Activated CD8-positive, alpha-beta T cell treated with anti-CD3 and anti-CD28 coated beads, Interleukin-2, amount 10 ng/mL, durations not matched to agents 7 days and 5 days (primary cell): ENCODE measurements at regions of chr17 and their contacts with region 1.

Region 1: GRCh38 chr17:37373530-37374159 is 2.1 kb upstream of the C17orf78 start:
- DNase-seq: peak; percentile 84
- ATAC-seq: peak; percentile 96
- H3K4me3 Mint-ChIP-seq: no peak overlapping the region
- H3K27ac Mint-ChIP-seq: no peak overlapping the region
- H3K4me1 Mint-ChIP-seq: peaks cover 12% of the 10 kb centered on the region
- H3K27me3 Mint-ChIP-seq: no peaks in the 10 kb centered on the region

Region 2: GRCh38 chr17:37211136-37211535 is 162.5 kb before region 1 on chr17:
- CTCF ChIA-PET with region 1: no interaction called
- POLR2A ChIA-PET with region 1: no interaction called
- DNase-seq: no peak
- ATAC-seq: no peak
- H3K4me3 Mint-ChIP-seq: no peak overlapping the region
- H3K27ac Mint-ChIP-seq: no peak overlapping the region
- H3K4me1 Mint-ChIP-seq: peaks cover 3% of the 10 kb centered on the region
- H3K27me3 Mint-ChIP-seq: no peaks in the 10 kb centered on the region

Region 3: GRCh38 chr17:37358830-37359681 is 14.6 kb before region 1 on chr17:
- CTCF ChIA-PET with region 1: interaction called, 21 read pairs
- POLR2A ChIA-PET with region 1: interaction called, 3 read pairs
- DNase-seq: peak; percentile 95
- ATAC-seq: peak; percentile 97
- H3K4me3 Mint-ChIP-seq: peak overlapping the region; percentile 88
- H3K27ac Mint-ChIP-seq: peak overlapping the region; percentile 81
- H3K4me1 Mint-ChIP-seq: peaks cover 28% of the 10 kb centered on the region
- H3K27me3 Mint-ChIP-seq: no peaks in the 10 kb centered on the region

Region 4: DNA sequence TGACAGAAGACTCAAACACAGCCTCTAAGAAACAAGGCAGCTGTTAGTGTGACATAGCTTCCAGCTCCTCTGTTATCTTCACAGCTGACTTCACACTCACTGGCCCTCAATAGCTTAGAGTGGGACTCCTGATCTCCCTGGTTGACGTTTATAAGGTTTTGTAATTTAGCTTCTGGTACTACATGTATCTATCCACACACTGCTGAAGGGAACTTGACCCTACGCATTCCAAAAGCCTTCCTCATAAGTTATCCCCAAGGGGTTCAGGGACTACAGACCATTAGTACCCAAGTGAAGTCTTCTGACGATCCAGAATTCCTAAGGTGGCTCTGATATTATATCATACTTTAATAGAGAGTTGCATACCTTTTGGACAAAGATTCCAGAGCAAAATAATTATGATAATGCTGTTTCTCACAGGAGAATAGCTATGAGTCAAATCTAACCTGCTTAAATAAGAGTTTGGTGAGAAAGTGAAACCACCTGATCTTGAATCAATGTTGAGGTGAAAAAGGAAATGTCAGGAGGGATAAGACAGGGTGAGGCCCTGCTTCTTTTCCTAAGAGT is 18.5 kb after region 1 on chr17:
- CTCF ChIA-PET with region 1: interaction called, 85 read pairs
- POLR2A ChIA-PET with region 1: no interaction called
- DNase-seq: no peak
- ATAC-seq: no peak
- H3K4me3 Mint-ChIP-seq: peak overlapping the region; percentile 17
- H3K27ac Mint-ChIP-seq: no peak overlapping the region
- H3K4me1 Mint-ChIP-seq: peaks cover 18% of the 10 kb centered on the region
- H3K27me3 Mint-ChIP-seq: no peaks in the 10 kb centered on the region

Region 5: GRCh38 chr17:37430051-37430627 is 56.5 kb after region 1 on chr17:
- CTCF ChIA-PET with region 1: interaction called, 14 read pairs
- POLR2A ChIA-PET with region 1: no interaction called
- DNase-seq: no peak
- ATAC-seq: peak; percentile 84
- H3K4me3 Mint-ChIP-seq: peak overlapping the region; percentile 30
- H3K27ac Mint-ChIP-seq: peak overlapping the region; percentile 88
- H3K4me1 Mint-ChIP-seq: peaks cover 32% of the 10 kb centered on the region
- H3K27me3 Mint-ChIP-seq: no peaks in the 10 kb centered on the region

Region 6: GRCh38 chr17:37650419-37651003 is 276.9 kb after region 1 on chr17:
- CTCF ChIA-PET with region 1: no interaction called
- POLR2A ChIA-PET with region 1: no interaction called
- DNase-seq: no peak
- ATAC-seq: no peak
- H3K4me3 Mint-ChIP-seq: no peak overlapping the region
- H3K27ac Mint-ChIP-seq: no peak overlapping the region
- H3K4me1 Mint-ChIP-seq: no peaks in the 10 kb centered on the region
- H3K27me3 Mint-ChIP-seq: peaks cover 55% of the 10 kb centered on the region